Heart left ventricle (tissue), 16 donors: ENCODE measurements at regions of chr17 and their contacts with region 1.

Region 1: DNA sequence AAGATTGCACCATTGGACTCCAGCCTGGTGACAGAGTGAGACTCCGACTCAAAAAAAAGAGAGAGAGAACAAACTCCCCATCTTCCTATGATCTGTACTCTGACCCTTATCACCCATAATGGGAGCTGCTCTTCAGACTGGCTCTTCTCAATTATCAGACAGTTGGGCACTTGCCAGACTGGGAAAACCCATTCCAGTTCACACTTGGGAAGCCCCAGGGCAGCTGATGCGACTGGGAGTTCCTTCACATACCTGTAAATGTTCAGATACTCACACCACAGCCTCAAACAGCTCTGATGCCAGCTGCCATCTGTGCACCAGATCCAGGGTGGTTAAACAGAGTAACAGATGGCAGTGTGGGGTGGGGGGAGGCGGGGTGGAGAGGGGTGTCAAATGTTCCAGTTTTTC is 23.8 kb upstream of the TMEM101 start:
- DNase-seq: no peak
- ATAC-seq: peak in 1 of 4 donors; percentile 3
- H3K4me3 ChIP-seq: no peak overlapping the region
- H3K27ac ChIP-seq: no peak overlapping the region
- H3K4me1 ChIP-seq: peaks cover 0 to 61% (median 29%) of the 10 kb centered on the region in 12 donors
- H3K27me3 ChIP-seq: no peaks in the 10 kb centered on the region
- CTCF ChIP-seq: no peak
- POLR2A ChIP-seq: no peak

Region 2: GRCh38 chr17:43946069-43946696 is 92.4 kb before region 1 on chr17:
- intact Hi-C with region 1: loop called (anchors 2 to 10 kb)
- DNase-seq: no peak
- ATAC-seq: no peak
- H3K4me3 ChIP-seq: no peak overlapping the region
- H3K27ac ChIP-seq: no peak overlapping the region
- H3K4me1 ChIP-seq: peaks cover 0 to 3% (median 0%) of the 10 kb centered on the region in 12 donors
- H3K27me3 ChIP-seq: peaks cover 0 to 40% (median 14%) of the 10 kb centered on the region in 9 donors
- CTCF ChIP-seq: no peak
- POLR2A ChIP-seq: no peak

Region 3: GRCh38 chr17:44095642-44096496 is 57.3 kb after region 1 on chr17:
- intact Hi-C with region 1: loop called in 1 of 10 experiments (anchors 10 kb)
- DNase-seq: peak; percentile 77 to 90 (median 86)
- ATAC-seq: peak; percentile 68 to 82 (median 73)
- H3K4me3 ChIP-seq: peak overlapping the region in 10 of 12 donors; percentile 3 to 62 (median 38)
- H3K27ac ChIP-seq: peak overlapping the region; percentile 78 to 98 (median 90)
- H3K4me1 ChIP-seq: peaks cover 5 to 65% (median 50%) of the 10 kb centered on the region in 12 donors
- H3K27me3 ChIP-seq: no peaks in the 10 kb centered on the region
- CTCF ChIP-seq: peak in 8 of 12 donors; percentile 24 to 48 (median 26)
- POLR2A ChIP-seq: no peak

Region 4: DNA sequence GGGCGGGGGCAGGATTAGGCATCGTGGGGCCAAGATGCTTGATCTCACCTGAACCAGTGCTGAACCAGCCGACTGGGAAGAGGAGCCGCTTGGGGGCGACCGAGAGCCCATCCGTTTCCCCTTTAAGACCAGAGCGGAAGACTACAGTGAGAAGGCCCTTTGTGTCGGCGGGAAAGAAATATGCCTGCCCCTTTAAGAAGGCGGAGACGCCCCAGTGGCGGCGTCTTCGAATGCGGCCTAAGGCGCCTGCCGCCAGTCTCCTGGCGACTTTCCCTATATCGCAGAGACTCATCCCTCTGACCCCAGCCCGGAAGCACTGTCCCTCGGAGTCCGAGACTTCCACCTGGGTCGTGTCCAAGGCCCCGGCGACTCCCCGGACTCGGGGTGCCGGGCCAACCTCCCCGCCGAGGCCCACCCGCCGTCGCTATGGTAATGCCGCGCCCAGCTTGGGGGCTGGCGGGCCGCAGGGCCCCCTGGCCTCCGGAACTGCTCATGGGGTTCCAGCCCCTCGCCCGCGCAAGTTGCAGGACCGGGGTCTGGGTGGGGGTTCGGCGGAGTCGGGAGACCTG is 103.2 kb after region 1 on chr17 and contains the start of gene HROB:
- intact Hi-C with region 1: no loop called
- DNase-seq: peak; percentile 94 to 96 (median 95)
- ATAC-seq: peak; percentile 79 to 90 (median 85)
- H3K4me3 ChIP-seq: peak within 1 kb of the TSS; percentile 54 to 90 (median 69)
- H3K27ac ChIP-seq: peak within 1 kb of the TSS in 7 of 12 donors; percentile 33 to 60 (median 54)
- H3K4me1 ChIP-seq: peaks cover 0 to 36% (median 17%) of the 10 kb centered on the region in 12 donors
- H3K27me3 ChIP-seq: no peaks in the 10 kb centered on the region
- CTCF ChIP-seq: peak; percentile 85 to 95 (median 92)
- POLR2A ChIP-seq: no peak
- total RNA-seq, gene HROB: 0.47 to 5.8 (median 0.84) TPM